Heart right ventricle (tissue), 16 donors: ENCODE measurements at regions of chr15 and their contacts with region 1.

Region 1: DNA sequence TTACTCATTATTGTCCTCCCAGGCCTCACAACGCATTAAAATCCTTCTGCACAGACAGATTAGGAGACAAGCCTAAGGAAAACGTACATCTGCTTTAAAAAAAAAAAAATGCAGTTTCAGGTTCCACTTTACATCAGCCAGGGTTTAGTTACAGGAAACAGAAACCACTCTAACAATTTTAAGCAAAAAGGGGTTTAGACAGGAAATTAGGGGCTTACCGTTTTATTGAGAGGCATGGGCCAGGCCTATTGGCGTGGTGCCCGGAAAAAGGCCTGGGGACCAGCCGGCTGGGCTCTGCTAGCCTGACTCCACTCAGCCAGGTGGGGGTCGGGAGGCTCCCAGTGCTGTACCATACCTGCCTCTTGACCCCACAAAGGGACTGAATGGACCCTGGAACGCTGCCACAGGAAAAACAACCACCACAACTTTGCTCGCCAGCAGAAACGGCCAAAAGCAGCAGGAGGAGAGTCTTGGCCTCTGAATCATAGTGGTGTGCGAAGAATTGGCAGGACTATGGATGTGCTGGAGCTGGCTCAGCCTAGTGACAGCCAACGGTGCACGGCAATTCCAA is 124.3 kb downstream of the CHSY1 start:
- DNase-seq: peak; percentile 73 to 86
- ATAC-seq: peak; percentile 92 to 95 (median 94)
- H3K4me3 ChIP-seq: no peak overlapping the region
- H3K27ac ChIP-seq: peak overlapping the region; percentile 14 to 94 (median 74)
- H3K4me1 ChIP-seq: peaks cover 0 to 69% (median 23%) of the 10 kb centered on the region in 9 donors
- H3K27me3 ChIP-seq: peaks cover 0 to 5% (median 0%) of the 10 kb centered on the region in 7 donors
- CTCF ChIP-seq: no peak

Region 2: DNA sequence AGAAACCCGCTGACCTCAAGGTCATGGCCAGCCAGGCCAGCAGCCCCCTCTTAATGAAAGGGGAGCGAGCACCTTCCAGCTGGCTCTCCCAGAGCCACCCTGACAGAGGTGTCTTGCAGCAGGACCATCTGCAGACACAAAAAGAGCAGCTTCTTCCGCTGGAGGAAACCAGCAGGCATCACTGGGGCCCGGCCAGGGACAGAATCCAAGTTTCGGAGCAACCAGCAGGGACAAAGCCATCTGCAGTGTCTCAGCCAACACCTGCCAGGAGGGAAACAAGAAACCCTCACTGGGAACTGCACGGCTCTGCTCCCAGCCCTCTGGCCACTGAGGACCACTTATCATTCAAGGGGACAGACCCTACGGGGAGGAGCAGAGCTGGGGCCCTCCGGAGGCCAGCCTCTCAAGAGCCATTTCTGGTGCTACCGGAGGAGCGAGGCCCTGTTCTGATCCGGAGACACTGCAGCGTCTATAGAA is 35.1 kb after region 1 on chr15:
- intact Hi-C with region 1: loop called in 3 of 10 experiments (anchors 2 to 5 kb)
- DNase-seq: peak; percentile 82 to 85
- ATAC-seq: peak; percentile 78 to 96 (median 90)
- H3K4me3 ChIP-seq: no peak overlapping the region
- H3K27ac ChIP-seq: peak overlapping the region; percentile 6 to 69 (median 50)
- H3K4me1 ChIP-seq: peaks cover 3 to 39% (median 29%) of the 10 kb centered on the region in 9 donors
- H3K27me3 ChIP-seq: no peaks in the 10 kb centered on the region
- CTCF ChIP-seq: no peak

Region 3: DNA sequence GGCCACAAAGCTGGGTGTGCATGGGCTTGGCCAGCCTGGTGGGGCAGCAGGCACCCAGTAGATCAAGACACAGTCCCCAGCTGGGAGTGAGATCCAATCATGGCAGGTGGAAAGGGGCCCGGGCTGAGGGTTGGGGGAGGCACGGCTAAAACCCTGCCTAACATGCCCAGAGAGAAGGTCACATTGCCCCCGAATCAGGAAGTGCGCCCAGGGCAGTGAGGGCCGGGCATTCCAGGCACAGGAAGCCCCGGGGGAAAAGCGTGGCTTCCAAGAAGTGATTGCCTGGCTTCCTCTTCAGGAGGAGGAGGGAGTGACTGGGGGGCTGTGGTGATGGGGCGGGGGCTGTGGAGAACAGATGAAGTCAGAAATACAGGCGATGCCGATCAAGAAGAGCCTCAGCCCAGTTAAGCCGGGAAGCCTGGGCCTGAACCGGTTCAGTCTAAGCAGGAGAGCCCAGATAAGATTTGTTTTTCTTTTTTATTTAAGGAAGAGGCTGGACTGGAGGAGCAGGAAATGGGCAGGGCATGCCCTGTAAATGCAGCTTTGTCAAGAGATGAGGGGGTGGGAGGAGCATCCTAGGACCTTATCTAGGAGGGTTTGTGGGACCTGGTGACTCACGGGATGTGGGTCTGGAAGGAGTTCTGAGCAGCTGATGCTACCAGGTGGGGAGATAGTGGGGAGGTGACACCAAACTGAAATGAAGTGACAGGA is 40.3 kb after region 1 on chr15:
- intact Hi-C with region 1: loop called in 2 of 10 experiments (anchors 5 kb)
- DNase-seq: peak; percentile 74 to 86
- ATAC-seq: peak; percentile 70 to 89 (median 82)
- H3K4me3 ChIP-seq: peak overlapping the region in 3 of 10 donors; percentile 16 to 18 (median 18)
- H3K27ac ChIP-seq: peak overlapping the region; percentile 60 to 96 (median 86)
- H3K4me1 ChIP-seq: peaks cover 13 to 72% (median 34%) of the 10 kb centered on the region in 9 donors
- H3K27me3 ChIP-seq: no peaks in the 10 kb centered on the region
- CTCF ChIP-seq: peak in 1 of 9 donors; percentile 7